ENCODE measurements at regions of chr1 and their contacts with region 1.

Region 1: DNA sequence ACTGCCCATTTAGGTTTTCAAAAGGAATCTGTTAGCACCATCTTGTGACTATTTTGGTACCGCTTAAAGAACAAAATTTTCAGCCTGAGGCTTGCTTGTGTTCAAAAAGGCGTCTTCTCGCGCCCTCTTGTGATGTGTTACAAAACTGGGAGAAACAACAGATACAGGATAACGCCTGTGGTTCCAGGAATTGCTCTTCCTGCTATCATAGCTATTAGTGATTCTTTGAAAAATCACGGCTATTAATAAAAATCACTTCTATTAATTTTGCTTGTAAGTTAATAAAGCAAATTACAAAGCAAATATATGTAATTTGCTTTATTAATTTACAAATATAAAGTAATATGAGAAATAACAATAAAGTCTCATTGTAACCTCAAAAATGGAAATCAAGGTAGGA is 82.2 kb upstream of the ABCD3 start:
- DNase-seq: peak; percentile 72

Region 2: DNA sequence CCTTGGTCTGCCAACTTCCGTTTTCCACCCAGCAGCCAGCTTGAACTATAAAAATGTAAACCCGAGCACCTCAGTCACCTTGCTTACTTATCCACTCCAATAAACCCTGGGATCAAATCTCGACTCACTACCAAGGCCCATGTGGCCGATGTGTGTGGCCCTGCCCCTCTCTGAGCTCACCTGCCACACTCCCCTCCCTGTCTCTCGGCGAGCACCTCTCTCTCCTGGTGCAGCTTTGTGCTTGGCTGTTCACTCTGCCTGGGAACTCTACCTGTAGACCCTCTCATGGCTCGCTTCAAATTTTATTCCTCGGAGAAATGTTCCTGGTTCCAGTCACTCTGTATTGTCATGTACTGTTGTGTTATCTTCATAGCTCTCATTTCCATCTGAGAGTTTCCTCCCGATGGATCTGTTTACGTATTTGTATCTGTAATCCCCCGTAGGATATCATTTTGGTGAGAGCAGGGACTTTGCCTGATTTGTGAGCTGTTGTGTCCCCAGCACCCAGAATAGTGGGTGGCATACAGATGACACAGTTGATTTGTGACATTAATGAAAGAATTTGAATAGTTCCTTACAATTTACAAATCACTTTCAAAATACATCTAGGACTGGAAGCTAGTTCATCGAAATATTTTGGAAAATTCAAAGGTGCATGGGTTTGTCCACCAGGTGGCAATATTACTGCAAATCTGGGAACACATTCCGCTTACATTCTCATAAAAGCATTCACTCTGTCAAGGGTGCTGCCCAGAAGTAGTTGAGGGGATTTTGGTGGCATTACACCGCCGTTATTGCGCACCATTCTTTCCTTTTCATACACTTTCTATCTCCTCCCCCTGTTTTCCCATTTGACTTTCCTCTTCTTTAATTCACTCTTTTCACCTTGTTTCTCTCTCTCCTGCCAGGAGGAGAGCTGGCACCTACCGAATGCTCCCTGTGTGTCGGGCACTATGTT is 310.3 kb before region 1 on chr1:
- CTCF ChIA-PET with region 1: interaction called, 58 read pairs
- POLR2A ChIA-PET with region 1: no interaction called
- DNase-seq: peak; percentile 82

Region 3: GRCh38 chr1:94039514-94039870 is 296.5 kb before region 1 on chr1:
- CTCF ChIA-PET with region 1: interaction called, 55 read pairs
- POLR2A ChIA-PET with region 1: no interaction called
- DNase-seq: peak; percentile 86

Region 4: DNA sequence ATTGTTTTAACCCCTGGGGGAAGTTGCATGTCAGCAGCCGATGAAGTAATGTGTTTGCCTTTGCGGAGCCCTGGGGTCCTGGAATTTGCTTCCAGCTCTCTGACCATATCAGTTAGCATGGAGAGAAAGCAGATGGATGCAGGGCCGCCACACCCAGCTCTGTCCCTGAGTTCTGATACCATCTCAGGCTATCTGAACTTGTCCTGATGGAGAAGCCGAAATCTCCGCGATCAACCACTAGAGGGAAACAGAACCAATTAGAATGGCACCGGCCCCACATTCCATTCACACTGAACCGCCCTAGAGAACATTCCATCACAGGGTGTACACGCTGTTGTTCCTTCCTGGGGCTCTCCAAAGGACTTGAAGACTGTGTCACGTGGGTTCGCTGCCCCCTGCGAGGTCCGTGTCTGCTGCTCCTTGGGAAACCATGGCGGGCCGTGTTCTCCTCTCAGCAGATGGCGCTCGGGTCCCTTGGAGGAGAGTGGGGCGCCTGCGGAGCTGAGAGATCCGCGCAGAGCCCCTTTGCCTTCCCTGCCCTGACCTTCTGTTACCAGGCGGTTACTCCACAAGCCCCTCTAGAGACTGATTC is 290.4 kb before region 1 on chr1:
- CTCF ChIA-PET with region 1: interaction called, 55 read pairs
- POLR2A ChIA-PET with region 1: no interaction called
- DNase-seq: peak; percentile 79

Region 5: GRCh38 chr1:94061513-94062443 is 274.2 kb before region 1 on chr1:
- CTCF ChIA-PET with region 1: interaction called, 93 read pairs
- POLR2A ChIA-PET with region 1: interaction called, 4 read pairs
- DNase-seq: peak; percentile 91

Region 6: DNA sequence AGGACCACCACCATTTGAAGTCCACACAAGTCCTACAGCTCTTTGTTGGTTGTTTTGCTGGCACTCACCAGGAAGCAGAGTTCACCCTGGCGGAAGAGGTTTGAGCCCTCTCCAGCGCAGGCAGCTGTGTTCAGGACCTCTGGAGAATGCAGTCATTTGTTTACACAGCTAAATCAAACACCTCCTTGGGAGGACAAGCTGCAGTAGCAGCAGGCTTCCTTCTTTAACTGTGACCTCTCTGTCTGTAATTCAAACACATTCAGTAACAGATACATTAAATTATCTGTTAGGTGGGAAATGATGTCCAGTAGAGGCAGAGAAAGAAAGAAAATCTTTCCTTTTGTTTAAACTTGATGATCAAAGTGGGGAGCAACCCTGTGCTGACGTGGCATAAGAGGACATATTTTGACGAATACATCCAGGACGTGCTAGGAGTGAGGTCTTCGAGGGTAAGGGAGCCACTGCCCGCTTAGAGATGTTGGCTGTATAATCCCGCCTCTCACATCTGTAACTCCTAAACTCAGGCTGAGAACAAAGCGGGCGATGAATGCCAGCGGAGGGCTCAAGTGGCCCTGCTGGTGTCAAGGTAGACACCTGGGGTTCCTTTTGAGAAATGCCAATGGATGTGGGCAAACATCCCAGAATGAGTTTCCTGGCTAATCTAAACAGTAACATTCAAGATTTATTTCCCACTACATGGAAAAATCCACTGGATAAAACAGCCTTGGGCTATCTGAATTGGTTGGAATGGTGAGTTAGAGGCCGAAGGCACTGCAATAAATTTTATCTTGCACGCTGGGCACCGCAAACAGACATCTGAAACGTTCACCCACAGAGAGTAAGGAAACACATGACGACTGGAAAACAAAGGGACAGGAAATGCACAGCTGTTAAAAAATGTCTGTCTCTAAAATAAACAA is 266.7 kb before region 1 on chr1:
- CTCF ChIA-PET with region 1: interaction called, 93 read pairs
- POLR2A ChIA-PET with region 1: no interaction called
- DNase-seq: peak; percentile 41

Region 7: GRCh38 chr1:94463765-94464330 is 127.9 kb after region 1 on chr1:
- CTCF ChIA-PET with region 1: interaction called, 19 read pairs
- POLR2A ChIA-PET with region 1: no interaction called
- DNase-seq: peak; percentile 63